HEK293T (cell line): ENCODE measurements at regions of chr5 and their contacts with region 1.

Region 1: DNA sequence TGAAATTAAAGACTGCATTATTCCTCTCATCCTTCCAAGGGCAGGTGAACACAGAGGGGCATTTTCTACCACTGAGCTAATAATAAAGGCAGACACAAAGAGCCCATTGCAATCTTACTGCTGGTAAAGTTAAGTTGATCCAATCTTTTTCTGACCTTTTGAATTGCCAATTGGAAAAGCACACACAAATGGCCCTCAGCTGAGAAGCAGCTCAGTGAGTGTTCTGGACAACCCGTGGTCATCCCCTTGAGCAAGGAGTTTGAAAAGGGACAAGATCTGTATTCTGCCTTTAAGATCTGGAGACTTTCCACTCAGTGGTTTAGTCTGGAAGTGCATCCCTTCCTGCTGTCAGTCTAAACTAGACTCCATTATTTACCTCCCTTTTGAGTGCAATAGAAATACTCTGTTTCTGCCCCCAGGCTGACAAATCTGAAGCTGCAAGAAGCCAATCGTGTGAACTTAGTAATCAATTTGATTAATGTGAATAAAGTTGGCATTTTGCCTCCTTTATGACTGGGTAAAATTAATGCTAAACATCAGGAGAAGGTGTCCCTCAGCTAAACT is 835.7 kb downstream of the MAT2B start:
- DNase-seq: peak; percentile 31

Region 2: GRCh38 chr5:164352695-164353094 is 11.6 kb after region 1 on chr5:
- CTCF ChIA-PET with region 1: interaction called, 10 read pairs
- POLR2A ChIA-PET with region 1: interaction called, 3 read pairs
- DNase-seq: no peak